ENCODE measurements at regions of chr12 and their contacts with region 1.

Region 1: DNA sequence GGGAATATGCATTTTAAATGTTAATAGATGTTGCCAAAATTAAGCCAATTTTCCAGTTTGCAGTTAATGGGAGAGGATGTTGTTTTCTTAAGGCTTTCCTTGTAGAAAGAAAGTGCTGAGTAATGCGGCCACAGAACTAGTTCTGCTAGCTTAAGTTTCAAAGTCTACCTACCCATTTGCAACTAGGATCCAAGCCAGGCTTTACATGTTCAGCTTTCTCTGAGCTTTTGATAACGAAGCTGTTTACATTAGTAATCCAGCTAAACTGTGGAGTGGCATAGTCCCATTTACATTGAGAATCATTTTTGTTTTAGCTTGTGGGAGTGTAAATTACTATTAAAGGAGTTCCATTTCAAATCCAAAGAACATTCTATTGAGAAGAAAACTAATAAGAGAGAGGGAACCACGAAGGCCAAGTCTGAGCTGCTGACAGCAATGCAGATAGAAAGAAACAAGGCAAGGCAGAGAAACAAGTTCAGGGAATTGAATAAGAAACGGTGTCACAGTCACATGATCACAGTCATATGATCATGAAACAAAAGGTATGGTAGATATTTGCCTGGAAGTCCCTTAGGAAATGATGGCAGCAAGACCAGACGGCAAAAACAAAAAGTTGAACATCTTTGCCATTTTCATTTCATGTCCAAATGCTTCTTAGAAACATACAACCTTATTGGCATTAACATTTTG is 274.9 kb downstream of the PAWR start:
- DNase-seq: no peak
- H3K4me3 ChIP-seq: no peak overlapping the region
- H3K27ac ChIP-seq: no peak overlapping the region
- H3K4me1 ChIP-seq: peaks cover 2 to 17% (median 13%) of the 10 kb centered on the region in 4 donors
- H3K27me3 ChIP-seq: no peaks in the 10 kb centered on the region
- CTCF ChIP-seq: no peak
- EP300 ChIP-seq: no peak
- POLR2A ChIP-seq: no peak

Region 2: DNA sequence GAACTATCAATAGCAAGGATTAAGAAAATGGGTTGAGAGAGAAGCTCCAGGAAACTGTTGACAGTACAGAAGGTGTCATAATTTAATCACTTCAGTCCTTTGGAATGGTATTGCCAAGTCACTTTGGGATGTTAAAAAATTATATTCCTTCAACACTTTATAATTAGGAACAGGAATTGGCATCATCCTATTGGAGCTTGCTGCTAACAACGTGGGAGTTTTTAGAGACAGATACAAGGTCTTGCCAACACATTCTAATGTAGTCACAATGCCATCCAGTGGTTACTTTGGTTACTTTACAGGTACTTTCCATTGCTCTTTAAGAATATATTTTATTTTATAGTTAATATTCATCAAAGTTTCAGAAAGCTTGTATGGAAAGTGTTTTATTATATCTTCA is 241.3 kb before region 1 on chr12:
- intact Hi-C with region 1: no loop called
- DNase-seq: no peak
- H3K4me3 ChIP-seq: no peak overlapping the region
- H3K27ac ChIP-seq: no peak overlapping the region
- H3K4me1 ChIP-seq: no peaks in the 10 kb centered on the region
- H3K27me3 ChIP-seq: no peaks in the 10 kb centered on the region
- CTCF ChIP-seq: no peak
- EP300 ChIP-seq: no peak
- POLR2A ChIP-seq: no peak

Region 3: DNA sequence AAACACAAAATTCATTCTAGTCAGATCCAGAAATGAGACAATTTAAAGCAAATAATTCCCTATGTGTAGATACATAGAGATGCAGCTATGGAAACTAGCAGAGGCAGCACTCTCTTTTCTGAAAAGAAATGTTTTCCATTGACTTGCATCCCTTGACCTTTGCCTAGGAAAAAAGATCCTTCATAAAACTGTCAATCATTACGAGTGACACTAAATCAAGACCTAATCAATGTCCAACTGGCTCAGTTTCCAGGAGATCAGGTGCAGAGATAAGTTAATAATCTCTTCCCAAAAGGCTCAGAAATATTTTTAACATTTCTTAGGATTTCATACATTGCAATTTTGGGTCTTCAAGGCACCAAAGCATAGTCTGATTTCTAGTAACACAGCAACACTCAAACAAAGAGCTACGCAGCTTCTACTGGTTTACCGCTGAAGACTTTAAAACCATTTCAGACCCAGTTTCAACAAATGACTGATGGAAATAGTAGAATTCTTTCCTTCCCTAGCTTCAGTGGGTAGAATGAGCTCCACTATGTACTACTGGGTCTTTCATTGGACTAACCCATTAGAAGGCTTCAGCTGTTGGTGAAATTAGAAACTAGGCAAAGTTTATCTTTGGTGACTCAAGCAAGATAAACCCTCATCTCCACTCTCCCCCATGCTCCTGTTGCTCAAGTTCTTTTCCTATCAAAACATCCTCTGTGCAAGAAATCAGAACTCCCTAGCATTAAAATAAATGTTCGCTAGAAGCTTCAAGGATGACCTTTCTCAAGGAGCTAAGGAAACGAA is 115.4 kb after region 1 on chr12:
- intact Hi-C with region 1: loop called (anchors 10 kb)
- DNase-seq: no peak
- H3K4me3 ChIP-seq: no peak overlapping the region
- H3K27ac ChIP-seq: no peak overlapping the region
- H3K4me1 ChIP-seq: no peaks in the 10 kb centered on the region
- H3K27me3 ChIP-seq: no peaks in the 10 kb centered on the region
- CTCF ChIP-seq: no peak
- EP300 ChIP-seq: no peak
- POLR2A ChIP-seq: no peak

Region 4: DNA sequence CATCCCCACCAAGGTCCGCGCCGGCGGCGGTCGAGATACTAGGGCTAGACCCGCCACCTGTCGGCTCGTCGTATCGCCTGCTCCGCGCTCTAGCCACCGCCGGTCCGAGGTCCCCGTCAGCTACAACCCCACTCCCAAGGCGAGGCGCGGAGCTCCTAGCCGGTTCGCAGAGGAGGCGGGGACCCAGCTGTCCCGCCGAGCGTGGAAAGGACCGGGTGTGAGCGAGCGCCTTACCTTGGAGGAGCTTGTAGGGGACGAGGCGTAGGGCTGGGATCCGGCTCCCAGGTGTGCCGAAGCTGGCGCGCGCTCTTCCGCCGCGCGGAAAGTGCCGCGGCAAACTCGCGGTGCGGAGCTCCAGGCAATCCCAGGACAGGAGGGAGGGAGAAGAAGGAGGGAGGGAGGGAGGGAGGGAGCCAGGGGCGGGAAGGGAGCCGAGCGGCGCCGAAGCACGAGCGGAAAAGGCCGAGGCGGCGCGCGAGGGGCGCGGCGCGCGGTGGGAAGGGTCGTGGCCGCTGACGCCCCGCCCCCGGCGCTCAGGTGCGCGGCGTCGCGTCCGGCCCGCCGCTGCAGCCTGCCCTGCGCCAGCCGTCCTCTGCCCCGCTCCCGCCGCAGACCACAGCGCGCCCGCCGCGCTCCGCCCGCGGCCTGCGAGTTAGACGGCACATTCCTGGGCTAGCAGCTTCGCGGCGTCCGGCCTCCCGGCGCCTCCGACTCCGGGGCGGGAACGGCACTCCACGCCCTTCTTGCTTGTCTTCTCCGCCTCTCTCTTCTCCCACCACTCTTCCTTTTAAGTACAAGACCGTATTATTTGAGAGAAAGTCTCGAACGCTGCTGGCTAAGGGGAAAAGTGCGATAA is 275.0 kb after region 1 on chr12 and contains the start of gene PAWR:
- intact Hi-C with region 1: loop called (anchors 5 kb)
- DNase-seq: no peak
- H3K4me3 ChIP-seq: peak within 1 kb of the TSS; percentile 77 to 97 (median 85)
- H3K27ac ChIP-seq: peak within 1 kb of the TSS; percentile 85 to 94 (median 93)
- H3K4me1 ChIP-seq: peaks cover 0 to 42% (median 32%) of the 10 kb centered on the region in 4 donors
- H3K27me3 ChIP-seq: no peaks in the 10 kb centered on the region
- CTCF ChIP-seq: peak; percentile 24 to 32 (median 29)
- EP300 ChIP-seq: no peak
- POLR2A ChIP-seq: no peak
- total RNA-seq, gene PAWR: 63.1 to 127 (median 97.9) TPM

Region 5: GRCh38 chr12:80195074-80195726 is 779.3 kb after region 1 on chr12:
- intact Hi-C with region 1: loop called (anchors 10 kb)
- DNase-seq: no peak
- H3K4me3 ChIP-seq: no peak overlapping the region
- H3K27ac ChIP-seq: no peak overlapping the region
- H3K4me1 ChIP-seq: peaks cover 0 to 14% (median 6%) of the 10 kb centered on the region in 4 donors
- H3K27me3 ChIP-seq: no peaks in the 10 kb centered on the region
- CTCF ChIP-seq: peak; percentile 51 to 68 (median 60)
- EP300 ChIP-seq: no peak
- POLR2A ChIP-seq: no peak